ENCODE measurements at regions of chr16 and their contacts with region 1.

Region 1: GRCh38 chr16:53737552-53737951 is 33.6 kb downstream of the FTO start:
- DNase-seq: no peak
- ATAC-seq: peak; percentile 66 to 91 (median 81)
- H3K4me3 ChIP-seq: no peak overlapping the region
- H3K27ac ChIP-seq: no peak overlapping the region
- H3K4me1 ChIP-seq: peaks cover 34% of the 10 kb centered on the region
- H3K27me3 ChIP-seq: no peaks in the 10 kb centered on the region
- CTCF ChIP-seq: no peak

Region 2: GRCh38 chr16:53809088-53809932 is 71.8 kb after region 1 on chr16:
- intact Hi-C with region 1: loop called in 1 of 2 experiments (anchors 10 kb)
- DNase-seq: no peak
- ATAC-seq: no peak
- H3K4me3 ChIP-seq: no peak overlapping the region
- H3K27ac ChIP-seq: no peak overlapping the region
- H3K4me1 ChIP-seq: no peaks in the 10 kb centered on the region
- H3K27me3 ChIP-seq: no peaks in the 10 kb centered on the region
- CTCF ChIP-seq: no peak

Region 3: DNA sequence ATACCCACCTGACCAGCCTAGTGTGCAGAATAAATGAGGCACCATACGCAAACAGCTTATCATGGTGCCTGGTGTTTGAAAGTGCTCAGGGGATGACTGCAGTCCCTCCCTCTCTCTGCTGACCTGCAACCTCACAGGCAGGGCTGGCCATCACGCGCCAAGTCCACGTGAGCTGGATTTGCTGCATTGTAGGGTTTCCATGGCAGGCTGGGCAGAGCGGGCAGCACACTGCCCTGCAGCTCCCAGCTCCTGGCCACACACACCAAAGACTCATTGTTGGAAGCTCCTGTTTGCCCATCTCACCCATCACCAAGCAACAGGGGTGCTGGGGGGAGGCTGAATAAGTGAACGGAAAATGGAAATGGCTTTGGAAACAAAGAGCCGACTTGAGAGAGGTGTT is 467.2 kb after region 1 on chr16:
- intact Hi-C with region 1: no loop called
- DNase-seq: no peak
- ATAC-seq: no peak
- H3K4me3 ChIP-seq: no peak overlapping the region
- H3K27ac ChIP-seq: no peak overlapping the region
- H3K4me1 ChIP-seq: no peaks in the 10 kb centered on the region
- H3K27me3 ChIP-seq: peaks cover 0 to 2% (median 0%) of the 10 kb centered on the region in 3 donors
- CTCF ChIP-seq: no peak